ENCODE measurements at regions of chr17 and their contacts with region 1.

Region 1: GRCh38 chr17:78300962-78301822 is 58.7 kb downstream of the SOCS3 start:
- DNase-seq: no peak
- ATAC-seq: no peak
- H3K4me3 Mint-ChIP-seq: no peak overlapping the region
- H3K27ac Mint-ChIP-seq: no peak overlapping the region
- H3K4me1 Mint-ChIP-seq: 0 out of 2 replicates have a peak, but pooled peaks cover 4% of the 10 kb centered on the region
- H3K27me3 Mint-ChIP-seq: no peaks in the 10 kb centered on the region
- CTCF ChIP-seq: no peak

Region 2: DNA sequence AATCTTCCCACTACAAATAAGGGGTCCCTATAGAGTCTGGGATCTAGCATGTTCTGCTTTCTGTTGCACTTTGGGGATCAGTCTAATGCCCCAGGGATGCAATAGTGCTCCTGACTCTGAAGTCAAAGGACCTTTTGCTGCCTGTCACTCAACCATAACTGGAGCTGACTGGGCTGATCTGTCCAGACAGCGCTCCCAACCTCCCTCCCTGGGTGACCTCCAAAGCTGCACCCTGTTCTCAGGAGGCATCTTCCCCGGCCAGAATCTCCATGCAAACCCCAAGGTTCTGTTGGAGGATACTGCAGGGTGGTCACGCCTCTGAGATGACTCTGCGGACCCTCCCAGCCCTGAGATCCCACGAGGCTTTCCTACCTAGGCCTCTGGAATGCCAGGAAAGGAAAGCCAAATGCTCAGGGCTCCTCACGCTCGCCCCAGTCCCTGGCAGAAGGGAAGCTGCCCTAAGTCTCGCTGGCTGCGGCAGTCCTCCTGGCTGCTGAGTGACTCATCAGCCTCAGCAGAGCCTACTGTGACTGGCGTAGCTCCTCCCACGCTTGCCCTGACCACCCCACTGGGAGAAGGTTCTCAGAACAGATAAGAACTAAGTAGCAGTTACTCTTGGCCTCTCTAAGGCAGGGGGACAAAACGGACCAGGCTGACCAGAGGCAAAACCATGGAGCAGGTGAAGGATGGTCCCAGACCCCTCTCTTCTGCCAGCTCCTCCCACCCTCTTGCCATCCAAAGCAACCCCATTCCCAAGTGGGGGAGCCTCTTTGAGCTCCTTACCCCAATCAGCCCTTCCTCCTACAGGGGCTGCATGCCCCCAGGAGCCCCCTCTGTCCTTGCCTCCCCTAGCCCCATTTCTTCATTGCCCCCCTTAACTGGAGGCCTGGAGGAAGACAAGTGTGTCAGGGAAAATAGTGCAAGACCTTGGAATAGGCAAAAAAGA is 466.7 kb before region 1 on chr17:
- CTCF ChIA-PET with region 1: no interaction called
- POLR2A ChIA-PET with region 1: interaction called, 12 read pairs
- DNase-seq: no peak
- ATAC-seq: peak; percentile 81
- H3K4me3 Mint-ChIP-seq: no peak overlapping the region
- H3K27ac Mint-ChIP-seq: 0 out of 2 replicates have a peak overlapping the region, but pooled peaks have one; percentile 53
- H3K4me1 Mint-ChIP-seq: peaks cover 46% of the 10 kb centered on the region
- H3K27me3 Mint-ChIP-seq: no peaks in the 10 kb centered on the region
- CTCF ChIP-seq: no peak

Region 3: GRCh38 chr17:78289802-78290363 is 11.3 kb before region 1 on chr17:
- CTCF ChIA-PET with region 1: no interaction called
- POLR2A ChIA-PET with region 1: no interaction called
- DNase-seq: peak; percentile 78
- ATAC-seq: peak; percentile 95
- H3K4me3 Mint-ChIP-seq: no peak overlapping the region
- H3K27ac Mint-ChIP-seq: no peak overlapping the region
- H3K4me1 Mint-ChIP-seq: peaks cover 1% of the 10 kb centered on the region
- H3K27me3 Mint-ChIP-seq: no peaks in the 10 kb centered on the region; the same call in 1 of the 2 replicates
- CTCF ChIP-seq: peak; percentile 63

Region 4: GRCh38 chr17:78421484-78422266 is 120.5 kb after region 1 on chr17:
- CTCF ChIA-PET with region 1: no interaction called
- POLR2A ChIA-PET with region 1: no interaction called
- DNase-seq: peak; percentile 91
- ATAC-seq: peak; percentile 84
- H3K4me3 Mint-ChIP-seq: no peak overlapping the region
- H3K27ac Mint-ChIP-seq: peak overlapping the region; percentile 91
- H3K4me1 Mint-ChIP-seq: peaks cover 17% of the 10 kb centered on the region
- H3K27me3 Mint-ChIP-seq: no peaks in the 10 kb centered on the region
- CTCF ChIP-seq: peak; percentile 92